ENCODE measurements at regions of chr16 and their contacts with region 1.

Region 1: DNA sequence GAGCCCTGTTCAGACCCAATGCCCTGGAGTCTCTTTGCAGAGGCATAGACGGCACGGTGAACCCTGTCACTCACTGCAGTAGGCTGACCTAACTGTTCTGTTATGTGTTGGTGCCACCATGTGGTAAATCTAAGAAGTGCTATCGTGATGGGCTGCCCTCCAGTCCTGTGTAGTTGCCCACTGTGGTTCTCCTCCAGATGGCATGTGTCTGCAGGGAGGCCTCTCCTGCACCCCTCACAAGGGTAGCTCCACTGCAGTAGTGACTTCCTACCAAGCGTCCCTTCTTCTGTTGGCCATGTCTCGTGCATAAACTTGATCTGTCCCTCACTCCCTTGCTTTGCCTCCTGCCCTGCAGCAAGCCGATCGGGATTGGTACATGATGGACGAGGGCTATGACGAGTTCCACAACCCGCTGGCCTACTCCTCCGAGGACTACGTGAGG is 5.8 kb downstream of the DHX38 start:
- DNase-seq: peak; percentile 13
- ATAC-seq: peak; percentile 96
- H3K4me3 ChIP-seq: no peak overlapping the region
- H3K27ac ChIP-seq: no peak overlapping the region
- H3K4me1 ChIP-seq: peaks cover 3% of the 10 kb centered on the region
- H3K27me3 ChIP-seq: no peaks in the 10 kb centered on the region
- CTCF ChIP-seq: peak; percentile 58 to 73 (median 64)
- EP300 ChIP-seq: no peak
- POLR2A ChIP-seq: no peak
- RAD21 ChIP-seq: peak; percentile 67

Region 2: DNA sequence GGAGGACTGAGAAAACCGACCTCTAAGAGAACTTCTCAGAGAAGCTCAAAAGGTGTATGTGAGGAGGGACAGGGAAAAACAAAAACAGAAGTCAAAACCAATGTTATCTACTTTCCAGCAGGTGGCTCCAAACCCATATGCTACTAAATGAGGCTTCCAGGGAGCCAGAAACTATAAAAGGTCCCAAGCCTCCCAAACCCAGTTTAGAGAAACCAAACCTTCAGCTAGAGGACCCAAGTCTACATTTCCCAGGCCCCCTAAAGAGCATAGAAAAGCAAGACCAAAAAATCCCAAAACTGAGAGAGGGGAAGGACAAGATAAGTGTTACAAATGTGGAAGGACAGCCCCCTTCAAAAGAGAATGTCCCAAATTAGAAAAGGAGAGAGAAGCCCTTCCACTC is 32.7 kb before region 1 on chr16:
- CTCF ChIA-PET with region 1: interaction called, 27 read pairs
- POLR2A ChIA-PET with region 1: no interaction called
- RAD21 ChIA-PET with region 1: interaction called, 4 read pairs
- SMC1A ChIA-PET with region 1: interaction called, 9 read pairs
- in situ Hi-C with region 1: no loop called
- intact Hi-C with region 1: loop called (anchors 1 kb)
- DNase-seq: no peak
- ATAC-seq: peak; percentile 84
- H3K4me3 ChIP-seq: no peak overlapping the region
- H3K27ac ChIP-seq: no peak overlapping the region
- H3K4me1 ChIP-seq: no peaks in the 10 kb centered on the region
- H3K27me3 ChIP-seq: no peaks in the 10 kb centered on the region
- CTCF ChIP-seq: peak; percentile 55 to 57 (median 56)
- EP300 ChIP-seq: no peak
- POLR2A ChIP-seq: no peak
- RAD21 ChIP-seq: peak; percentile 67

Region 3: DNA sequence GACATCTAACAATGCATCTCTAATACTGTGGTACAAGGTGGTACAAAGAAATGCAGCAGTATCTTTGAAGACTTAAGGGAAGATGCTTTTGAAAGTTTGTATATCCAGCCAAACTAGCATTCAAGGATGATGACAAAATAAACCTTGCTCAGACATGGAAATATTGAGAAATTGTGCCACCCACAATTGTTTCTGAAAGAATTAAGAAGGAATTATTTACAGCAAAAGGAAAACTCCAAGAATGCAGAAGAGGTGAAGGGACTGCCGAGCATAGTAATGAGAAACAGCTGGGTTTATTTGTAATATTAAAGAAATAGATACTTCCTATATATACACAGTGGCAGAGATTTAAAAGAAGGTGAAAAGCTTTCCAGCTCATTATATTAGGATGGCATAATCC is 43.1 kb after region 1 on chr16:
- CTCF ChIA-PET with region 1: no interaction called
- POLR2A ChIA-PET with region 1: no interaction called
- RAD21 ChIA-PET with region 1: no interaction called
- SMC1A ChIA-PET with region 1: no interaction called
- in situ Hi-C with region 1: no loop called
- intact Hi-C with region 1: no loop called
- DNase-seq: no peak
- ATAC-seq: no peak
- H3K4me3 ChIP-seq: no peak overlapping the region
- H3K27ac ChIP-seq: no peak overlapping the region
- H3K4me1 ChIP-seq: no peaks in the 10 kb centered on the region
- H3K27me3 ChIP-seq: no peaks in the 10 kb centered on the region
- CTCF ChIP-seq: no peak
- EP300 ChIP-seq: no peak
- POLR2A ChIP-seq: no peak
- RAD21 ChIP-seq: no peak